ENCODE measurements at regions of chr11 and their contacts with region 1.

Region 1: GRCh38 chr11:43393765-43394355 is 35.1 kb downstream of the TTC17 start:
- DNase-seq: peak in 4 of 5 donors; percentile 18 to 54 (median 38)
- ATAC-seq: peak in 3 of 4 donors; percentile 52 to 74 (median 64)
- H3K4me3 ChIP-seq: no peak overlapping the region
- H3K27ac ChIP-seq: no peak overlapping the region
- H3K4me1 ChIP-seq: peaks cover 0 to 12% (median 2%) of the 10 kb centered on the region in 12 donors
- H3K27me3 ChIP-seq: no peaks in the 10 kb centered on the region
- CTCF ChIP-seq: no peak
- POLR2A ChIP-seq: no peak

Region 2: GRCh38 chr11:43250309-43250708 is 143.6 kb before region 1 on chr11:
- intact Hi-C with region 1: no loop called
- DNase-seq: no peak
- ATAC-seq: no peak
- H3K4me3 ChIP-seq: no peak overlapping the region
- H3K27ac ChIP-seq: no peak overlapping the region
- H3K4me1 ChIP-seq: no peaks in the 10 kb centered on the region
- H3K27me3 ChIP-seq: peaks cover 0 to 4% (median 0%) of the 10 kb centered on the region in 9 donors
- CTCF ChIP-seq: no peak
- POLR2A ChIP-seq: no peak

Region 3: GRCh38 chr11:43327987-43328386 is 65.9 kb before region 1 on chr11:
- intact Hi-C with region 1: no loop called
- DNase-seq: no peak
- ATAC-seq: no peak
- H3K4me3 ChIP-seq: no peak overlapping the region
- H3K27ac ChIP-seq: no peak overlapping the region
- H3K4me1 ChIP-seq: no peaks in the 10 kb centered on the region
- H3K27me3 ChIP-seq: no peaks in the 10 kb centered on the region
- CTCF ChIP-seq: no peak
- POLR2A ChIP-seq: no peak

Region 4: GRCh38 chr11:43341159-43341558 is 52.7 kb before region 1 on chr11:
- intact Hi-C with region 1: loop called in 1 of 10 experiments (anchors 5 kb)
- DNase-seq: no peak
- ATAC-seq: no peak
- H3K4me3 ChIP-seq: no peak overlapping the region
- H3K27ac ChIP-seq: no peak overlapping the region
- H3K4me1 ChIP-seq: no peaks in the 10 kb centered on the region
- H3K27me3 ChIP-seq: no peaks in the 10 kb centered on the region
- CTCF ChIP-seq: no peak
- POLR2A ChIP-seq: no peak

Region 5: DNA sequence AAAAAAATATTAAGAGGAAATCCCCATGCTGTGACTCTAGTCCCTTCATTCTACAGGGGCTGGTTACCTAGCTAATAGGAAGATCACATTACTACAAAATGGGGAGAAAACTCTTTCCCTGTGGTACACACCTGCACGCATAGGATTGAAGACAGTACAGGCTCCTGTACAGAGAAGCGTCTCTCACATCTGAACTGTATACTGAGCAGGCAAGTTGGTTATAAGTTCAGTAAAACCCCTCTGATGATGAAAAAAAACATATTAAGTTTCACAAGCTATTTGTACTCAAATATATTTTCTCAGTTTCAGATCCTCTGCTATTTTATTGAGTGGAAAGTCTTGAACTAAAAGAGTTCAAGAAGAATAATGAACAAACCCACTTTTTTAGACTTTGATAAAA is 129.8 kb after region 1 on chr11:
- intact Hi-C with region 1: no loop called
- DNase-seq: no peak
- ATAC-seq: no peak
- H3K4me3 ChIP-seq: no peak overlapping the region
- H3K27ac ChIP-seq: no peak overlapping the region
- H3K4me1 ChIP-seq: no peaks in the 10 kb centered on the region
- H3K27me3 ChIP-seq: peaks cover 0 to 6% (median 0%) of the 10 kb centered on the region in 9 donors
- CTCF ChIP-seq: no peak
- POLR2A ChIP-seq: no peak

Measured in heart left ventricle (tissue), 16 donors.